ENCODE measurements at regions of chr12 and their contacts with region 1.

Region 1: DNA sequence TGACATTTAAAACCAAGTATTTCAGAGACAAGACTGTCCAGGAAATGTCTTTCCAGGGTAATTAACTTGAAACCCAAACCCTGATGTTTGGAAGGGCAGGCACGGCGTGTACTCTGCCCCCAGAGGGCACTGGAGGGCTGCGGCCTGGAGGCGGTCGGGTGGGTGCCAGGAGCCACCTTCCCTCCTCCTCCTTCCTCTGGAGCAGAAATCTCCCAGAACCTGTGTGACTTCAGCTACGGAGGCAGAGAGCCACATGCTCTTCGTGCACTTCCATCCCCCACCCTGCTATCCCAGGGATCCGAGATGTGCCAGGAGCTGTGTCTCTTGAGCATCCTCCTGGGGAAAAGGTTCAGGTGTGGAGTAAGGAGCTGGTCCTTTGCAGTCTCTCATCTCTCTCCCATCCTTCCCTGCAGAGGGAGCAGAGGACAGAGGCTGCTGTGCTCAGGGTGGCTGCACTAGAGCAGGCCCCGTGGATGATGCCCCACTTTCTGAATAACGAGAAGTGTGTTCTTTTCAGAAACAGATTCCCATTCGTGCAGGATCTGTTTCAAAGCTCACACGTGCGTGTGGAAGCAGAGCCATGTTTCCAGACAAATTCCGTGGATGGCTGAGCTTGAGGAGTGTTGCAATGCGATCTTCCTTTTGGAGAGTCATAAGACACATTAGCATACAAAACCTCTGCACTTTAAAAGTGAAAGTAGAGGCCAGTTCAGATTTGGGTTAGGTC is 162.8 kb downstream of the ADGRD1 start:
- DNase-seq: peak; percentile 36 to 45
- ATAC-seq: peak; percentile 60 to 83; a peak in 5 of 6 replicates
- H3K4me3 ChIP-seq: no peak overlapping the region
- H3K27ac ChIP-seq: no peak overlapping the region; a peak in 1 of 6 replicates
- H3K4me1 ChIP-seq: peaks cover 16% of the 10 kb centered on the region
- CTCF ChIP-seq: peak; percentile 56
- EP300 ChIP-seq: no peak
- POLR2A ChIP-seq: no peak
- RAD21 ChIP-seq: peak; percentile 76 to 84

Region 2: DNA sequence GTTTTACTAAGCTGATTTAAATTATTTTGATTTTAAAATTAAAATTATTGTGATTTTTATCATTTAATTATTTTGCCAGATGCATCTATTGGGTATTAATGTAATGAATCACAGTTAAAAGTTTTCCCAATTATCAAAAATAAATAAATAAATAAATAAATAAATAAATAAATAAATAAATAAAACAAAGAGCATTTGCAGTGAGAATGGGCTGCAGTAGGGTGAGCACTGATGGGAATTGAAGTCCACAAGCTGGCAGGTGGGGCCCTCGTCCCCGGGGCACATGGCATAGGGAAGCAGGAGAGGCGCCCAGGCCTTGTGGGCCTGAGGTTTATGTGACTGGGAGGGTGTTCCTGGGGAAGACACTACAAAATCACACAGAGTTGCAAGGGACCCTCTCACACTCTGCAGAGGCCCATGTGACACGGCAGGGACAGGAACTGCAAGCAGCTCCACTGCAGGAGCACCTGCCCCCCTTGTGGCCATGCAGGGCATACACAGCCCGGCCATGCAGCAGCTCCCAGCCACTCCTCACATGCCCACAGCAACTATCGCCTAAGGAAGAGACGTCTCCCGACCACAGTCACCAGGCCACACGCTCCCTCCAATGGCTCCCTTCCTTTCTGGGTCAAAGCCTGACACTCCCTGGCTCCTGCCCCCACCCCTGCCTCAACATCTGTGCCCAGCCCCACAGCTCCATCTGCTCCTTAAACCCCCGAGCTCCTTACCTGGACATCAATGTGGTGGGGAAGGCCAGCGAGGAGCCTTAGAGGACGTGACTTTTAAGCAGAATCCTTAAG is 338.1 kb after region 1 on chr12:
- CTCF ChIA-PET with region 1: interaction called, 18 read pairs
- POLR2A ChIA-PET with region 1: no interaction called
- DNase-seq: peak; percentile 84 to 87
- ATAC-seq: peak; percentile 97 to 100
- H3K4me3 ChIP-seq: no peak overlapping the region
- H3K27ac ChIP-seq: peak overlapping the region in 1 of 2 experiments; percentile 56; a peak in 3 of 6 replicates
- H3K4me1 ChIP-seq: no peaks in the 10 kb centered on the region
- CTCF ChIP-seq: peak; percentile 64
- EP300 ChIP-seq: no peak
- POLR2A ChIP-seq: no peak
- RAD21 ChIP-seq: peak; percentile 81 to 88

Region 3: DNA sequence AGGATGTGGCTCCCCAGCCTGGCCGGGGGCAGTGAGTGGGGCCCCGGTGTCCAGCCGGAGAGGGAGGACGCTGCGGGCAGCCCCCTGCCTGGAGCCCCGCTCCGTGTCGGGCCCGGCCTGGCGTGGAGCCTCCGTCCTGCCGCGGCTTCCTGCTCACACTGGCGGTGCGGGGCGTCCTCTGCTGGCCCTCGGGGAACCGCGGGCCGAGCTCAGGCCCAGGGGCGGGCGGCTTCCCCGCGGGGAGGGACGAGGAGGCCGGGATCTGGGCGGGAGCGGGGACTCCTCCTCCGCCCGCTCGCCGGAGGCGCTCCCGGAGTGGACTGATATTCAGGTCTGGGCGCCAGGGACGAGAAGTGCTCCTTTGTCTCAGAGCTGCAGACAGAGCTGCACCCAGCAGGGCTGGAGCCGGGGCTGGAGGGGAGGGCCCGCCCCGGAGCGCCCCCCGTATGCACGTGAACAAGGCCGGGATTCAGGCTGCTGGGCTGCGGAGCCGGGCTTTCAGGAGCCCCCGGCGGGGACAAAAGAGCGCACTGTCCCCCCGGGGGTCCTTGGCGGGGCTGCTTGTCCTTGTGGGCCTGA is 713.9 kb after region 1 on chr12:
- CTCF ChIA-PET with region 1: interaction called, 19 read pairs
- POLR2A ChIA-PET with region 1: no interaction called
- DNase-seq: peak; percentile 58 to 86
- ATAC-seq: peak; percentile 48 to 81
- H3K4me3 ChIP-seq: peak overlapping the region; percentile 91
- H3K27ac ChIP-seq: peak overlapping the region; percentile 89 to 91
- H3K4me1 ChIP-seq: peaks cover 31% of the 10 kb centered on the region
- CTCF ChIP-seq: peak; percentile 80
- EP300 ChIP-seq: no peak
- POLR2A ChIP-seq: peak; percentile 44
- RAD21 ChIP-seq: peak; percentile 75 to 89